ENCODE measurements at regions of chr12 and their contacts with region 1.

Region 1: DNA sequence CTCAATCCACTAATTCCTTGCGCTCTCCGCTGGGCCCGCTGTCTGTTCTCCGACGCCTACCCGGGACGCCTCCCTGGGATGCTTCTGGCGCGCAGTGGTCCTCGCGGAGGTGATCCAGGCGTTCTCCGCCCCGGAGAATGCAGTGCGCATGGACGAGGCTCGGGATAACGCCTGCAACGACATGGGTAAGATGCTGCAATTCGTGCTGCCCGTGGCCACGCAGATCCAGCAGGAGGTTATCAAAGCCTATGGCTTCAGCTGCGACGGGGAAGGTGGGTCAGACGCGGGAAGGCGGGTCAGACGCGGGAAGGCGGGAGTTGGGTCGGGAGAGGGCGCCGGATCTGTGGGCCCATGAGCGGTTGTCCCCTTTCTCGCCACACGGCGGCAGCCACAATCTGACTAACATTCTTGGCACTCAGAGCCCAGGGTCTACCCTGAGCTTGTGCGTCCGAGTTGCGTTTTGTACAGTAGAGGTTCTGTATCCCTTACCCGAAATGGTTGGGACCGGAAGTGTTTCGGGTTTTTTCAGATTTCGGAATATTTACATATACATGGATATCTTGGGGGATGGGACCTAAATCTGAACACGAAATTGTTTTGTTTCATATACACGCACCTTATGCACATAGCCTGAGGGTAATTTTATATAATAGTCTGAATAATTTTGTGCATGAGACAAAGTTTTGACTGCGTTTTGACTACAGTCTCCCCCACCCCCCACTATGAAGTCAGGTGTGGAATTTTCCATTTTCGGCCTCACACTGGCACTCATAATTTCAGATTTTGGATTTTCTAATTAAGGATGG is 762 bp downstream of the C12orf57 start:
- DNase-seq: peak; percentile 94
- ATAC-seq: peak; percentile 75 to 80

Region 2: GRCh38 chr12:6965026-6965661 is 20.6 kb after region 1 on chr12:
- intact Hi-C with region 1: loop called in 1 of 2 experiments (anchors 2 kb)
- DNase-seq: peak; percentile 91
- ATAC-seq: peak; percentile 69 to 76

Region 3: DNA sequence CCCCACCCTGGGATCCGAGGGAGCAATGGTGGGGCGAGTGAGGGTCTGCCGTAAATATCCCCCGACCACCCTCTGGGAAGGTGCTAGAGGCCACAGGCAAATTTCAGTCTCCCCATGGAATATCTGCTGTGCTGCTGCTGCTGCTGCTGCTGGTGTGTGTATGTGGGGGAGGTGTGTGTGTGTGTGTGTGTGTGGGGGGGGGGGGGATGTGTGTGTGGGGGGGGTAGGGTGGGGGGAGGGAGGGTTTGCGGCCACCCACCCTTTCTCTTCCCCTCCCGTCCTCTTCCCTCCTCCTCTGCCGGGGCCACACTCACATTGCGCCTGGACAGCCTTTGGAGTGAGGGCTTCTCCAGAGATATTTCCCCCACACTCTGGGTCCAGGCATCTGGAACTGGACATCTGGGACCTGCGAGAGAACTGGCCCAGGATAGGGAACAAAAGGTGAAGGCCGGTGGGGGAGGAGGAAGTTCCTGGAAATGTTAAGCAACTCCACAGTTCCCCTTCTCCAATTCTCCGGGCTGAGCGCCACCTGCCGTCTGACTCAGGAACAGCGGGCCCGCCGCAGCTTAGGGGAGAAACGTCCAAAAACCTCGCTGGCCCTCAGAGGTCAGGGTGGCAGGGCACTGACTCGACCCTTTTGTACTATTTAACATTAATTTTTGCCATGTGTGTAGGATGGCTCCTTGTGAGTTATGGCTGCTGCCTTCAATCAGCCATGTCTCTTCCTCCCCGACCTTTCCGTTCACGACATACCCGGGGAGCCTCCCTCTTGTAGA is 164.4 kb after region 1 on chr12 and contains the start of gene C1RL:
- intact Hi-C with region 1: loop called in 1 of 2 experiments (anchors 2 kb)
- DNase-seq: peak; percentile 92
- ATAC-seq: peak; percentile 84 to 86
- total RNA-seq, gene C1RL: 23.0 to 29.8 TPM

Region 4: DNA sequence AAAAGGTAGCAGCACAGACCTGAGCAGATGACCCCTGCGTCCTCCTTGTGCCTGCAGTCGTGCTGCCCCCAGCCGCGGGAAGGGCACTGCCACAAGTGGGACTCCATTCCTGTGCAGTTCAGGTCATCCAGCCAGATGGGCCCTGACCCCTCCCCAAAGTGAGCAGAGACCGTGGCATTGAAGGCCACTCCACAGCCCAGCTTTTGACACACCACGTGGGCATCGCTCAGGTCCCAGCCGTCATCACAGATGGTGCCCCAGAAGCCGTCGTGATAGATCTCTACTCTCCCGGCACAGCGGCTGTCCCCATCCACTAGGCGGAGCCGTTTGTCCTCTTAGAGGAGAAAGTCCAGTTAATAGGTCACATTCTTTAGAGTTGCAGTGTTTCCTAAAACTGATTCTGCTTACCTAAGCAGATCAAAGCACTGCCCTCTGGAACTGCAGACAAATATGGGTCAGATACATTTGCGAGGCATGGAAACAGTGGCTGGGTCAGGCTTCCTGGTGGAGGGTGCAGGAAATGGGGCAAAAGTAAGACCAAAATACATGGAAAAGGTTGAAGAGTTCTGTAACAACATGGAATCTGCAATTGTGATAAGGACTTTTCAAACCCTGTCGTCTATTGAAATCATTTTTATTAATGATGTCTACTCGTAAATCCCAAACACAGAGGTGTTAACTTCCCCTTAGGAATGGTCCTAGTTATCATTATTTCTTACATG is 430.0 kb after region 1 on chr12:
- intact Hi-C with region 1: no loop called
- DNase-seq: no peak
- ATAC-seq: no peak